ENCODE measurements at regions of chr18 and their contacts with region 1.

Region 1: GRCh38 chr18:31574359-31574758 is 17.3 kb upstream of the TTR start:
- DNase-seq: no peak
- H3K4me3 ChIP-seq: no peak overlapping the region
- CTCF ChIP-seq: no peak
- POLR2A ChIP-seq: no peak

Region 2: DNA sequence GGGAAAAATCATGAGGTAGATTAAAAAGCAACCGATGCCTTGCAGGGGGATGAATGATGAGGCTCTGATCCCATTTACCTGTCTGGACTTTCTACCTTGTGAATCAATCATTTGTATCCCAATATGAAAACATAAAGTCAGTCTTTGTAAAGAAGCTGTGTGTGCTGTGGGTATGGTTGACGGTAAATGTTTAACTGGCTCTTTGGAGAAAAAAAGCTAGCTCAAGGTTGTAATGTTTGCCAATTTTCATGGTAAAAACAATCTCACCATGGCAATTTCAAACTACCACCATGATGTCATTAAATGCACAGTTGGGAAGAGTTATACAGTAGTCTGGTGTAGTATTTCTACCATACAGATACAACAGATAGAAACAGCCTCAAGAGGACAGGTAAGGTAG is 31.9 kb after region 1 on chr18:
- intact Hi-C with region 1: loop called (anchors 5 kb)
- DNase-seq: no peak
- H3K4me3 ChIP-seq: no peak overlapping the region
- CTCF ChIP-seq: no peak
- POLR2A ChIP-seq: no peak

Measured in lower leg skin (tissue), 4 donors.